ENCODE measurements at regions of chr5 and their contacts with region 1.

Region 1: DNA sequence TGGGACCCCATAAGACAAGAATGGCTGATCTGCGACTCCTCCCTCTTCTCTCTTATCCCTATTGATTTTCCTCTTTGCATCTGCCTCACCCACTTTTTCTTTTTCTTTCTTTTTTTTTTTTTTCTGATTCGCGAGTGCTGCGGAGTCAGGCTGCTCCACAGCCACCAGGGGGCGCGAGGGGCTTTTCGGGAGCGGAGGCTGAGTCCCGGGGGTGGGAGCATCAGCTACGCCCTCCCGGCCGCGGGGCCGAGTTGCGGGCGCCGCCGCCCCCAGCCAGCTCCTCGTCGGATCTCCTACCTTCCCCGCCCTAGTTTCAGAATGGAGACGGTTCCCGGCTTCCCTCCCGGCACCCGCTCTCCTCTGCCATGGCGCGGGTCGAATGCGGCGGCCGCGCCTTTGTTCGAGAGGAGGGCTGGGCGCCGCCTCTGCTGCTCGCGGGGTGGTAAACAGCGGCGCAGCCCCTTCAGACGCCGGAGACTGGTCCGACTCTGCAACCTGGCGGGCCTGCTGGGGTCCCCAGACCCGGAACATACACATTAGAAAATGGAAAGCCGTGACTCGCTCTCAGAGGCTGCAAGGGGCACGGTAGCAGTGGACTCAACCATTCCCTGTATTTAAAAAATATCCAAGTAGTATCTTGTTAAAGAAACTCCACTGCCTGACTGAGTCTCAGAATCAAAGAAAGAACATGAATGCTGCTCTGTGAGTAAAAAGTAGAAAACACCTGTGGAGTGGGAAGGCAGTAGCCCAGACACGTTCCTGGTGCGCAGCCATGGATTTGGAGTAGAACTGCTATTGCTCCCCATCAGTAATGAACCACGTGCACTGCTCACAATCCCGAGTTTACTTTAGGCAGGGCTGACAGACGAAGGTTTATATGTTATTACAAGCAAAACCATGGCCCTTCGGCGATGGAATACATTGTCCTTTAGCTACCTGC is 55.7 kb downstream of the DPYSL3 start:
- DNase-seq: peak; percentile 93
- ATAC-seq: peak; percentile 91

Region 2: GRCh38 chr5:147417135-147417813 is 36.9 kb before region 1 on chr5:
- intact Hi-C with region 1: no loop called
- DNase-seq: peak; percentile 49
- ATAC-seq: peak; percentile 88

Region 3: DNA sequence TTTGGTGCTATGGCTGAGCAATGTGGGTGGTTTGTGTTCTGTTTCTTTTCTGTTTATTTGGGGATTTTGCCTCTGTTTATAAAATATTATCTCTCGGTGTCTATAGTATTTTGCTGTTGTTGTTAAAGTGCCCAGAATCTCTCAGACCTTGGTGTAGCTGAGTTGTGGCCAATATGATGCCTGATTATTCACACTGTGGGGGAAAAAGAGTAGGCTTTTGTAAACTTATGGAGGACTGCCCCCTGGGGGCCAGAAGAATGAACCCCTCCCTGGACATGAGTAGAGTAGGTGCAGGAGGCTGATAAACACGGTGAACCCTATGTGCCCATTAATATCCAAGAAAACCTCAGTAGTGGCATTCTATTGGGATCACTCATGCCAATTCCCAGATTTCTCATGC is 104.7 kb after region 1 on chr5:
- intact Hi-C with region 1: loop called (anchors 5 kb)
- DNase-seq: peak; percentile 51
- ATAC-seq: peak; percentile 77

Region 4: DNA sequence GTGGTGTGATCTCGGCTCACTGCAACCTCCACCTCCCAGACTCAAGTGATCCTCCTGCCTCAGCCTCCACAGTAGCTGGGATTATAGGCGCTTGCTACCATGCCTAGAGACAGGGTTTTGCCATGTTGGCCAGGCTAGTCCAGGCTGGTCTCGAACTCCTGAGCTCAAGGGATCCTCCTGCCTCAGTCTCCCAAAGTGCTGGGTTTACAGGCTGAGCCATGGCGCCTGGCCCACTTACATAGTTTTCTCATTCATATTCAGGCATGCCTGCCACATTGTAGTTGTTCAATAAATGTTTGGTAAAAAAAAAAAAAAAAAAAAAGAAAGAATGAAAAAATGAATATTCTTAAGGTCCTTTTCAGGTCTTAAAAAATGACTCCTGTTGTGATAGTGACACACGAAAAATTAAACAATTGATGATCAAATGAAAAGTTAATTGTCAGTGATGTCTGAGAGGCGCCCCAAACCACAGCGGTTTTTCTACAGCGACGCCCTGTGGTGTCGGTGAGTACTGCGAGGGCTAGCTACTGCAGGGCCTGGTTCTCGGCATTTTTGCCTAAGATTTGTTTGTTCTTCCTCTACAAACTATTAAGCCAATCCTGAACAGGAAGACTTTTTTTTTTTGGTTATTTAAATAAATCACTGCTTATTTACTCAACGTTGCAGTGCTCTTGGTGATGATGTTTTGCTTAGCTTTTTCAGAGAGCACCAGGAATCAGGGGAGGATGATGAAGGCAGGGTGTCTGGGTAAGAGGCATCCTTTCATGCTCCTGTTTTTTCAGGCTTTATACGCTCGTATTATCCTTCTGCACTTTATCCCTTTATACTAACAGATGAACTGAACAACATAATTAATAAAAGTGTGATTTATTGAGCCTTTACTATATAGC is 122.7 kb after region 1 on chr5:
- intact Hi-C with region 1: loop called (anchors 5 kb)
- DNase-seq: peak; percentile 76
- ATAC-seq: peak; percentile 70

Measured in left ventricle myocardium superior (tissue), 1 donor.